ENCODE measurements at regions of chr2 and their contacts with region 1.

Region 1: GRCh38 chr2:189698020-189698887 is 23.8 kb downstream of the ANKAR start:
- DNase-seq: peak; percentile 67
- ATAC-seq: peak; percentile 61; the same call in 2 of the 3 replicates
- H3K4me3 ChIP-seq: no peak overlapping the region
- H3K27ac ChIP-seq: no peak overlapping the region
- H3K4me1 ChIP-seq: no peaks in the 10 kb centered on the region
- H3K27me3 ChIP-seq: no peaks in the 10 kb centered on the region
- CTCF ChIP-seq: peak; percentile 41; the same call in 1 of the 2 replicates
- EP300 ChIP-seq: no peak
- POLR2A ChIP-seq: no peak
- RAD21 ChIP-seq: no peak

Region 2: GRCh38 chr2:189466660-189467059 is 231.6 kb before region 1 on chr2:
- CTCF ChIA-PET with region 1: no interaction called
- POLR2A ChIA-PET with region 1: no interaction called
- in situ Hi-C with region 1: no loop called
- intact Hi-C with region 1: loop called (anchors 1 kb)
- DNase-seq: peak; percentile 55
- ATAC-seq: peak; percentile 78
- H3K4me3 ChIP-seq: no peak overlapping the region
- H3K27ac ChIP-seq: no peak overlapping the region
- H3K4me1 ChIP-seq: 0 out of 2 replicates have a peak, but pooled peaks cover 10% of the 10 kb centered on the region
- H3K27me3 ChIP-seq: no peaks in the 10 kb centered on the region
- CTCF ChIP-seq: peak; percentile 61
- EP300 ChIP-seq: no peak
- POLR2A ChIP-seq: no peak
- RAD21 ChIP-seq: peak; percentile 74

Region 3: GRCh38 chr2:189674374-189675112 is 23.7 kb before region 1 on chr2 and contains the start of gene ANKAR:
- CTCF ChIA-PET with region 1: interaction called, 17 read pairs
- POLR2A ChIA-PET with region 1: interaction called, 6 read pairs
- in situ Hi-C with region 1: no loop called
- intact Hi-C with region 1: loop called (anchors 1 kb)
- DNase-seq: peak; percentile 88
- ATAC-seq: peak; percentile 99
- H3K4me3 ChIP-seq: peak within 1 kb of the TSS; percentile 85 to 93 (median 85)
- H3K27ac ChIP-seq: peak within 1 kb of the TSS; percentile 90
- H3K4me1 ChIP-seq: peaks cover 21% of the 10 kb centered on the region
- H3K27me3 ChIP-seq: no peaks in the 10 kb centered on the region; a peak in 1 of 5 replicates
- CTCF ChIP-seq: peak; percentile 94
- EP300 ChIP-seq: peak in 1 of 2 experiments; percentile 51; a peak in 1 of 4 replicates
- POLR2A ChIP-seq: peak; percentile 80 to 90
- RAD21 ChIP-seq: peak; percentile 97
- total RNA-seq, gene ANKAR: 3.0 and 3.6 TPM in 2 replicates

Measured in HepG2 (cell line).